BJ (cell line): ENCODE measurements at regions of chr9 and their contacts with region 1.

Region 1: DNA sequence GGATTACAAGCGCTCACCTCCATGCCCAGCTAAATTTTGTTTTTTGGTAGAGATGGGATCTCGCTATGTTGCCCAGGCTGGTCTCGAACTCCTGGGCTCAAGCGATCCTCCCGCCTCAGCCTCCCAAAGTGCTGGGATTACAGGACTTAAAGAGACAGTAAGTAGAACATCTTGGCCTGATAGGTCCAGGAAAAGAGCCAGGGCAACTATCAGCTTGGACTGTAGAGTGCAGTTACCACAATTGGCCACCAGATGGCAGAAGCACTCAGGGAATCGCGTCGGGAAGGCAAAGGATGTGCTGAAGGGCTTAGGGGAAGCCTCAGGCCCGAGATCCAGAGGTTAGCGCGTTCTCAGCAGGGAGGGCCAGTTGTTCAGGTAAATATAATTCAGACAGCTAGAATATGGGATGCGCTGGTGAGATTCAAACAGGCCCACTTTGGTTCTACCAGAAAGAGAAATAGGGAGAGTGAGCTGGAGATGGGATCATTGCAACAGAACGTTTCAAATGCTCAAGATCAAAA is 21.5 kb downstream of the C9orf57 start:
- DNase-seq: no peak
- H3K4me3 ChIP-seq: no peak overlapping the region
- H3K27me3 ChIP-seq: no peaks in the 10 kb centered on the region
- CTCF ChIP-seq: peak; percentile 90

Region 2: GRCh38 chr9:71562140-71562539 is 476.8 kb before region 1 on chr9:
- CTCF ChIA-PET with region 1: no interaction called
- POLR2A ChIA-PET with region 1: interaction called, 11 read pairs
- DNase-seq: no peak
- H3K4me3 ChIP-seq: no peak overlapping the region
- H3K27me3 ChIP-seq: no peaks in the 10 kb centered on the region; the same call in 1 of the 2 replicates
- CTCF ChIP-seq: no peak

Region 3: GRCh38 chr9:71806901-71807307 is 232.0 kb before region 1 on chr9:
- CTCF ChIA-PET with region 1: interaction called, 14 read pairs
- POLR2A ChIA-PET with region 1: no interaction called
- DNase-seq: no peak
- H3K4me3 ChIP-seq: no peak overlapping the region
- H3K27me3 ChIP-seq: no peaks in the 10 kb centered on the region
- CTCF ChIP-seq: peak; percentile 91

Region 4: GRCh38 chr9:72022841-72023240 is 16.1 kb before region 1 on chr9:
- CTCF ChIA-PET with region 1: interaction called, 55 read pairs
- POLR2A ChIA-PET with region 1: no interaction called
- DNase-seq: peak; percentile 47
- H3K4me3 ChIP-seq: no peak overlapping the region
- H3K27me3 ChIP-seq: no peaks in the 10 kb centered on the region
- CTCF ChIP-seq: no peak

Region 5: GRCh38 chr9:72271613-72272478 is 232.9 kb after region 1 on chr9:
- CTCF ChIA-PET with region 1: interaction called, 188 read pairs
- POLR2A ChIA-PET with region 1: no interaction called
- DNase-seq: no peak
- H3K4me3 ChIP-seq: no peak overlapping the region
- H3K27me3 ChIP-seq: peaks cover 2% of the 10 kb centered on the region
- CTCF ChIP-seq: peak; percentile 77

Region 6: DNA sequence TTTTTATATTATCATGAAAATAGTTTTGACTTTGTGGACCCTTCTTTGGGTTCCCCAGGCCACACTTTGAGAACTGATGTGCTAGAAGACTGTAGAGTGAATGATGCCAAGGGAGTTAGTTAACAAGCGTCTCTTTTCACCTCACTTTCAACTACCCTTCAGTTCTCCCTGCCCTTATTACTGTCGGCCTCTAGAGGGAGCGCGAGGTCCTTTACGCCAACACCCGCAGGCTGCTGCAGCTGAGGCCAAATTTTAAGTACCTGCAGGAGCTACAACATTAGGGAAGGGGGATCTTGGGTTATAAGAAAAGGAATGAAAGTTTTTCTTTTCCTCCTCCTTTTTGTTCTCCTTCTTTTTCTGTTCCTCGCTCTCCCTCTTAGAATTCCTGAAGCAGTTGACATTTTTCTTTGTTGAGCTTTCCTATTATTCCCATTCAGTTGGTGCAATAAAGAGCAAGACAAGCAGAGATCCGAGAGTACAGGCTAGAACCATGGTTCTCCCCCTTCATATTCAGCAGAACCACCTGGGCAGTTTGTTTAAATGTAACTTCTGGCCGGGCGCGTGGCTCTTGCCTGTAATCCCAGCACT is 242.1 kb after region 1 on chr9:
- CTCF ChIA-PET with region 1: interaction called, 188 read pairs
- POLR2A ChIA-PET with region 1: no interaction called
- DNase-seq: peak; percentile 14
- H3K4me3 ChIP-seq: no peak overlapping the region
- H3K27me3 ChIP-seq: peaks cover 2% of the 10 kb centered on the region; the same call in 1 of the 2 replicates
- CTCF ChIP-seq: peak; percentile 95

Region 7: GRCh38 chr9:72827950-72828731 is 789.2 kb after region 1 on chr9:
- CTCF ChIA-PET with region 1: interaction called, 21 read pairs
- POLR2A ChIA-PET with region 1: no interaction called
- DNase-seq: peak; percentile 13
- H3K4me3 ChIP-seq: no peak overlapping the region
- H3K27me3 ChIP-seq: peaks cover 3% of the 10 kb centered on the region; the same call in 1 of the 2 replicates
- CTCF ChIP-seq: no peak